Calu3 (cell line): ENCODE measurements at regions of chr12 and their contacts with region 1.

Region 1: GRCh38 chr12:121626087-121626852 is at the start of gene ORAI1:
- DNase-seq: peak; percentile 99
- H3K4me3 Mint-ChIP-seq: peak within 1 kb of the TSS; percentile 76
- H3K27ac Mint-ChIP-seq: peak within 1 kb of the TSS; percentile 67
- H3K4me1 Mint-ChIP-seq: peaks cover 29% of the 10 kb centered on the region
- H3K27me3 Mint-ChIP-seq: no peaks in the 10 kb centered on the region
- CTCF ChIP-seq: no peak
- total RNA-seq, gene ORAI1: 33.4 and 35.5 TPM in 2 replicates

Region 2: GRCh38 chr12:121668750-121669520 is 42.7 kb after region 1 on chr12:
- CTCF ChIA-PET with region 1: interaction called, 17 read pairs
- intact Hi-C with region 1: loop called (anchors 5 kb)
- DNase-seq: peak; percentile 63
- H3K4me3 Mint-ChIP-seq: no peak overlapping the region
- H3K27ac Mint-ChIP-seq: no peak overlapping the region
- H3K4me1 Mint-ChIP-seq: peaks cover 20% of the 10 kb centered on the region
- H3K27me3 Mint-ChIP-seq: no peaks in the 10 kb centered on the region
- CTCF ChIP-seq: peak; percentile 73

Region 3: GRCh38 chr12:122250047-122250446 is 623.8 kb after region 1 on chr12:
- CTCF ChIA-PET with region 1: no interaction called
- intact Hi-C with region 1: no loop called
- DNase-seq: no peak
- H3K4me3 Mint-ChIP-seq: no peak overlapping the region
- H3K27ac Mint-ChIP-seq: no peak overlapping the region
- H3K4me1 Mint-ChIP-seq: no peaks in the 10 kb centered on the region
- H3K27me3 Mint-ChIP-seq: no peaks in the 10 kb centered on the region
- CTCF ChIP-seq: no peak